ENCODE measurements at regions of chr7 and their contacts with region 1.

Region 1: DNA sequence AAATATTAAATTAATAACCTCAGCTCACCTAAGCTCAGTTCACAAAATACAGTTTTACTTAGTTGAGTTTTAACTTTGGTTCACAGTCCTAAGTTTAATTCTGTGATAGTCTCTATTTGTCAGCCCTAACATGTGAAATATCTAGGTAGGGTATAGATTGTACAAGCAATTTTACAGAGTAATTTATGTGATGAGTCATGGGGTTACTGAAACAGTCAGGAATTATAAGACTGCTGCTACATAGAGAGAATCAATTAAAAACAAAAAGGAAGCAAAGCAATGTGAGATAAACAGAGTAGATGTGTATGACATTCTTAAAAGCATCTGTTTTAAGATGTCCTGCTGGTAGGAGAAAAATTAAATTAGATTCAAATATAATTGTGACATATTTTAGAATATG is 1018.2 kb upstream of the KCND2 start:
- DNase-seq: no peak
- H3K4me3 ChIP-seq: no peak overlapping the region
- CTCF ChIP-seq: no peak

Region 2: DNA sequence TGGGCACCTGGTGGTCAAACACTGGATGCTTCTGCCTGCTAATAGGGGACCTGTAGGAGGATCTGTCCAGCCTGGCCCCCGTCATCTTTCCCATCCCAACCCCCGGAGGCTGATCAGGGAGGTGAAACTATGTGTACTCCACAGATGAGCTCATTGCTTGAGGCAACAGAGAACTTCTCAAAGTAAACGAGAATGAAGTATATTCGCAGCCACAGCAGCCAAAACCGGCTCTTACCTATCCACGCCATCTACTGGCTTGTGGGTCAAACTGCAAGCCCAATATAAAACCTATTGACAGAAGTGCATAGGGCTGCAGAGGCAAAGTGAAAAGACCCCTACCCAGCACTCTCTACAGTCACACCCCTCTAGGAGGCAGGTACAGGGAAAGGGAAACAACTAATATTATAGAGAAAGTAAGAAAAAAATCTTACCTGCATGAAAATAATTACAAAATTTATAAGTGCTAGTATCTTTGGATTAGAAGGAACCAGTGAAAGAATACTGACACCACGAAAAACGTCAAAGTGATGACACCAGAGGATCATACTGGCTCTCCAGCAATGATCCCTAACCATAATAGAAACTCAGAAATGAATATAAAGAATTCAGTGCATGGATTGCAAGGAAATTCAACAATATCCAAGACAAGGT is 56.7 kb before region 1 on chr7:
- in situ Hi-C with region 1: loop called (anchors 10 kb)
- DNase-seq: peak; percentile 18
- H3K4me3 ChIP-seq: no peak overlapping the region
- CTCF ChIP-seq: peak; percentile 87